ENCODE measurements at regions of chr9 and their contacts with region 1.

Region 1: GRCh38 chr9:109579191-109579948 is 81.3 kb upstream of the PTPN3 start:
- DNase-seq: no peak
- ATAC-seq: no peak
- H3K4me3 ChIP-seq: no peak overlapping the region
- H3K27ac ChIP-seq: no peak overlapping the region
- H3K4me1 ChIP-seq: no peaks in the 10 kb centered on the region
- H3K27me3 ChIP-seq: no peaks in the 10 kb centered on the region
- CTCF ChIP-seq: no peak

Region 2: GRCh38 chr9:109817846-109818472 is 238.6 kb after region 1 on chr9:
- CTCF ChIA-PET with region 1: no interaction called
- POLR2A ChIA-PET with region 1: no interaction called
- in situ Hi-C with region 1: no loop called
- intact Hi-C with region 1: loop called (anchors 5 kb)
- DNase-seq: peak; percentile 69
- ATAC-seq: no peak
- H3K4me3 ChIP-seq: no peak overlapping the region
- H3K27ac ChIP-seq: no peak overlapping the region
- H3K4me1 ChIP-seq: no peaks in the 10 kb centered on the region
- H3K27me3 ChIP-seq: no peaks in the 10 kb centered on the region
- CTCF ChIP-seq: peak; percentile 70

Region 3: DNA sequence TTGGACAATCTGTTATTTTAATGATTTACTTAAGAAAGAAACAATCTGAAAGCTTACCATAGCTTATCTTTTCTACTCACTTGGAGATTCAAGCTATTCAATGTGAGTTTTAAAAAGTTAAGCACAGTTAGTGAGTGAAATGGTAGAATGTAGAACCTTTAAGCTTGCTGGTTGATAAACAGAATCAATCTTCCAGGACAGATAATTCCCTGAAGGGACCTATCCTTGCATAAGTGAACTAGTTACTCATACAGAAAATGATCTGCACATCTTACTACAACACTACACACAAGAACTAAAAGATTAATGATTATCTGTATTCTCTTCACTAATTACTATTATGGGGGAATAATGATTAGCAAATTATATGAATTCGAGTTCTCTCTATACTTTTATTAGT is 366.2 kb after region 1 on chr9:
- CTCF ChIA-PET with region 1: no interaction called
- POLR2A ChIA-PET with region 1: no interaction called
- in situ Hi-C with region 1: no loop called
- intact Hi-C with region 1: loop called (anchors 5 kb)
- DNase-seq: no peak
- ATAC-seq: no peak
- H3K4me3 ChIP-seq: no peak overlapping the region
- H3K27ac ChIP-seq: no peak overlapping the region
- H3K4me1 ChIP-seq: no peaks in the 10 kb centered on the region
- H3K27me3 ChIP-seq: no peaks in the 10 kb centered on the region
- CTCF ChIP-seq: no peak

Region 4: GRCh38 chr9:110152704-110153374 is 573.5 kb after region 1 on chr9:
- CTCF ChIA-PET with region 1: no interaction called
- POLR2A ChIA-PET with region 1: no interaction called
- in situ Hi-C with region 1: no loop called
- intact Hi-C with region 1: loop called (anchors 5 kb)
- DNase-seq: peak; percentile 22
- ATAC-seq: no peak; the same call in none of the 2 replicates
- H3K4me3 ChIP-seq: no peak overlapping the region
- H3K27ac ChIP-seq: no peak overlapping the region
- H3K4me1 ChIP-seq: no peaks in the 10 kb centered on the region
- H3K27me3 ChIP-seq: no peaks in the 10 kb centered on the region
- CTCF ChIP-seq: peak; percentile 69

Measured in Panc1 (cell line).